ENCODE measurements at regions of chr3 and their contacts with region 1.

Region 1: GRCh38 chr3:123328851-123329635 is 119.8 kb downstream of the ADCY5 start:
- DNase-seq: peak; percentile 32
- ATAC-seq: peak; percentile 93
- H3K4me3 ChIP-seq: no peak overlapping the region
- H3K27ac ChIP-seq: no peak overlapping the region
- H3K4me1 ChIP-seq: peaks cover 4% of the 10 kb centered on the region; the same call in 1 of the 2 replicates
- H3K27me3 ChIP-seq: 0 out of 2 replicates have a peak, but pooled peaks cover 2% of the 10 kb centered on the region
- CTCF ChIP-seq: peak; percentile 99

Region 2: DNA sequence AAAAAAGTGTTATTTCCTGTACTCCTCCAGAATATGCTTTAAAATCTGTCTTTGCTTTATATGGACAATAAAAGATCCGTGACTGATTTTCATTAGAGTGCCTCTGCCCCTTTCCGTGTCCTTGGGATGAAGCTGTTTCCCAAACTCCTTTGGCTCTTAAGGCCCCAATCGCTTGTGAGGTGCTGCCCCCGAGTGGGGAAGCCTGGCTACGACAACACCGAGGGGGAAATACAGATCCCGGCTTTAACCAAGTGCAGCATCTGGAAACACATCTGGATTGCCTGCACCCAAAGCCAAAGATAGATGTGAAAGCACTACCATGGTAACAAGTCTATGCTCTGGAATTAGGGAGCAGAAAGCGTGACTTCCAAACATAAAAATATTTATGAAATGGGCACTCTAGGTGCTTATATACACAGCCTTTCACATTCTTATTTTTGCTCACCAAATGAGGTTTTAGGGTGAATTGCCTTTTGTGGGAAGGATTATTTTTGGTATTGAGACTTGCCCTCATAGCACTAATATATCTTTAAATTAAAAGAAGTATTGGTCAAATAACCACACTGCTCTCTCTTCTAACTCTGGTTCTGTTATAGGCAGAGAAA is 160.5 kb after region 1 on chr3:
- CTCF ChIA-PET with region 1: interaction called, 3 read pairs
- POLR2A ChIA-PET with region 1: no interaction called
- in situ Hi-C with region 1: no loop called
- intact Hi-C with region 1: loop called (anchors 1 kb)
- DNase-seq: peak; percentile 52
- ATAC-seq: peak; percentile 88
- H3K4me3 ChIP-seq: no peak overlapping the region
- H3K27ac ChIP-seq: no peak overlapping the region
- H3K4me1 ChIP-seq: no peaks in the 10 kb centered on the region
- H3K27me3 ChIP-seq: no peaks in the 10 kb centered on the region
- CTCF ChIP-seq: peak; percentile 95

Region 3: GRCh38 chr3:123559040-123559861 is 230.2 kb after region 1 on chr3:
- CTCF ChIA-PET with region 1: no interaction called
- POLR2A ChIA-PET with region 1: no interaction called
- in situ Hi-C with region 1: no loop called
- intact Hi-C with region 1: loop called (anchors 5 kb)
- DNase-seq: no peak
- ATAC-seq: peak; percentile 78
- H3K4me3 ChIP-seq: no peak overlapping the region
- H3K27ac ChIP-seq: no peak overlapping the region
- H3K4me1 ChIP-seq: no peaks in the 10 kb centered on the region
- H3K27me3 ChIP-seq: no peaks in the 10 kb centered on the region
- CTCF ChIP-seq: peak; percentile 82; the same call in 1 of the 2 replicates